ENCODE measurements at regions of chr2 and their contacts with region 1.

Region 1: DNA sequence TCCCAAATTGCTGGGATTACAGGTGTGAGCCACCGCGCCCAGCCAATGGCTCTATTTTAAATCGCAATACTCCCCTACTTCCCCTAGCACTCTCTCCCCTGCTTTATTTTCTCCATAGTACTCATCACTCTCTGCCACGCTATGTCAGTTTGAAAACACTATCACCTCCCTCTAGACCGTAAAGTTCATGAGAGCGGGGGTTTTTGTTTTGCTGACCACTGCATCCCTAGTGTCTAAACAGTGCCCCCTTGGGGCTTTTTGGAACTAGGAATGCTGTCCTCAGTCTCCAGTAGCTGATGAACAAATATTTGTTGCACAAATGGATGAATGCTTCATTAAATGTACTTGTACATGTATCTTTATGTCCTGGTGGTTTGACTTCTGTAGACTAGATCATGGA is 44.1 kb downstream of the ATOH8 start:
- DNase-seq: peak in 1 of 7 donors; percentile 54
- H3K4me3 ChIP-seq: no peak overlapping the region
- H3K27ac ChIP-seq: no peak overlapping the region
- H3K4me1 ChIP-seq: peaks cover 2 to 6% of the 10 kb centered on the region in 2 donors
- H3K27me3 ChIP-seq: no peaks in the 10 kb centered on the region
- CTCF ChIP-seq: peak; percentile 22 to 63 (median 50)
- POLR2A ChIP-seq: no peak

Region 2: DNA sequence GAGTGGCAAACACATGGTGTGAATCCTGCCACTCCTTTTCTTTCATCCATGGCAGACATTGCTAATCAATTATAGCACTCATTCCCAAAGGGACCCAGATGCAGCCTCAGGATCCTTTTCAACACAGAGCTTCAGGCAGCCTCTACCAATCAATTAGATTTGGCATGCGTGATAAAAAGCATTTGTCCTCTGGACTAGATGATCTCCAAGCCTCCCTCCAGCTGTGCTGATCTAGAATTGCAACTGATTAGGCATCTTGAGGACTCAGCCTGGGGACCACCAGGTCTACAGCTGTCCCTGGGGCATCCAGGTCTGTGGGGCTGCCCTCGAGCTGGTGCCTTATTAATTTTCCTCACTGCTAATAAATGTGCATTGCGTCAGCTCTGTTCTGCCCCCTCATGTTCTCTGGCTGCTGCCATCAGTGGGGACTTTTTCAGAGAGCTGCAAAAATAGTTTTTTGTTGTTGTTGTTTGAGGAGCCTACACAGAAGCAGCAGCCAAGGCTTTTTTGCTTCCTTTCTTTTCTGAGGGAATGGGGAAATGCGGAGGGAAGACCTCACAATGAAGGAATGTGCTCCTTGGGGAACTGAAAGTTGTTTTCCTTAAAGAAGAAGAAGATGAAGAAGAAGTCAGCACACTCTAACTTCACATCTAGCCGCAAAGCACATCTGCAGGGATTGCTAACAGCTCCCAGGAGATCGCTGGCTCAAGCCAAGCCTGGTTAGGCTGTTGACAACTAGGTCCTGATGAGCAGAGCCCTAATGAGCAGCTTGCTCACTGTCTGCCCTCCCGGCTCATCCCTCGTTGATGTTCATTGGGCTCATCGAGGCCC is 52.9 kb before region 1 on chr2:
- intact Hi-C with region 1: loop called in 1 of 2 experiments (anchors 5 kb)
- DNase-seq: peak in 2 of 7 donors; percentile 40 to 65
- H3K4me3 ChIP-seq: no peak overlapping the region
- H3K27ac ChIP-seq: peak overlapping the region in 2 of 5 donors; percentile 67 to 77
- H3K4me1 ChIP-seq: peaks cover 17 to 47% of the 10 kb centered on the region in 2 donors
- H3K27me3 ChIP-seq: no peaks in the 10 kb centered on the region
- CTCF ChIP-seq: no peak
- POLR2A ChIP-seq: no peak

Measured in adrenal gland (tissue), 19 donors.